Stomach (tissue), 19 donors: ENCODE measurements at regions of chr3 and their contacts with region 1.

Region 1: GRCh38 chr3:94071713-94072284 is 8.9 kb downstream of the NSUN3 start:
- DNase-seq: no peak
- H3K4me3 ChIP-seq: no peak overlapping the region
- H3K27ac ChIP-seq: no peak overlapping the region
- H3K4me1 ChIP-seq: peaks cover 0 to 31% (median 14%) of the 10 kb centered on the region in 4 donors
- H3K27me3 ChIP-seq: no peaks in the 10 kb centered on the region
- CTCF ChIP-seq: no peak
- EP300 ChIP-seq: no peak
- POLR2A ChIP-seq: no peak

Region 2: GRCh38 chr3:93904568-93904967 is 167.2 kb before region 1 on chr3:
- intact Hi-C with region 1: no loop called
- DNase-seq: no peak
- H3K4me3 ChIP-seq: no peak overlapping the region
- H3K27ac ChIP-seq: no peak overlapping the region
- H3K4me1 ChIP-seq: no peaks in the 10 kb centered on the region
- H3K27me3 ChIP-seq: no peaks in the 10 kb centered on the region
- CTCF ChIP-seq: no peak
- EP300 ChIP-seq: no peak
- POLR2A ChIP-seq: no peak

Region 3: DNA sequence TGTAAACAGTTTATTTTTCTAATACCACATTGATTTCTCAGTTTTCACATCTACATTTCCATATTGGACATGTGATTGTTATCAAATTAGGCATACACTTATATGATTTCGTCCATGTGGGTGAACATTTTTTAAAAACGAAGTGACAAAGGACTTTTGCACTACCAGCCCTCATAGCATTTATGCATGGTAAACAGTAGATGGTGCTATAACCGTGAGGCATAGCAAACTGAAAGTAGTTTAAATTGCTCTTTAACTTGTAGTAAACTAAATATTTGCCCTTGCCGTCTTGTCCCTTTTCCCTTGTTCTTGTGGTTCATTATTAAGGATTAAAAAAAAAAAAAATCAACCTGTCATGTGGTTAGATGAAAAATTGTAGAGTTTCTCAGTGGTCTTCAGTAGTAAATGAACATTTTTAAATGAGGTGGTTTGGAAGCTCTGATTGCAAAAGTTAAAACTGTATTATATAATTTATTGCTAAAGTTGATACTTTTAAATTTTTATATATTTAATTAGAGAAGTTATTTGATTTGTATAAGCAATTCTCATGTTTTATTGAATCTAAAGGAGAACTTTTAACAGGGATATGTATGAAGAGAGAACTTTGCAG is 67.4 kb before region 1 on chr3:
- intact Hi-C with region 1: loop called (anchors 5 kb)
- DNase-seq: peak in 1 of 2 donors; percentile 82
- H3K4me3 ChIP-seq: peak overlapping the region in 3 of 4 donors; percentile 9 to 23 (median 14)
- H3K27ac ChIP-seq: peak overlapping the region in 1 of 5 donors; percentile 21
- H3K4me1 ChIP-seq: peaks cover 0 to 50% (median 9%) of the 10 kb centered on the region in 4 donors
- H3K27me3 ChIP-seq: no peaks in the 10 kb centered on the region
- CTCF ChIP-seq: peak in 5 of 7 experiments; percentile 58 to 78 (median 72)
- EP300 ChIP-seq: no peak
- POLR2A ChIP-seq: no peak

Region 4: GRCh38 chr3:94173676-94174434 is 102.1 kb after region 1 on chr3:
- intact Hi-C with region 1: no loop called
- DNase-seq: no peak
- H3K4me3 ChIP-seq: no peak overlapping the region
- H3K27ac ChIP-seq: no peak overlapping the region
- H3K4me1 ChIP-seq: no peaks in the 10 kb centered on the region
- H3K27me3 ChIP-seq: no peaks in the 10 kb centered on the region
- CTCF ChIP-seq: no peak
- EP300 ChIP-seq: no peak
- POLR2A ChIP-seq: no peak

Region 5: DNA sequence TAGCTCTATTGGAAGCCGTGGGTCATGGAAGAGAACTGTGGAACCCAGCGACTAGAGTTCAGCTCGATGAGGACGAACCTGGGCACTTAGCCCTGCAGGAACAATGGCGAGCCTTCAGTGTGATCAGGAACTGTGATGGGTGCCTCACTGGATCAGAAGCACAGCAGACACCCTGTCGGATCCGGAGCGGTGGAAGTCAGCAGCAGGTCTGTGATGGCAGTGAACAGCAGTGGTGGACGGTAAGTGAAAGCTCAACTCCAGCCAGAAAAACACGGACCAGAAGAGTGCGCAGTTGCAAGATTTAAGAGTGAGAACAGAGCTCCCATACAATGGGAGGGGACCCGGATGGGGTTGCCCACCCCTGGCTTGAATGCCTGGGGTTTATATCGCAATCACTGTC is 273.3 kb after region 1 on chr3:
- intact Hi-C with region 1: no loop called
- DNase-seq: no peak
- H3K4me3 ChIP-seq: no peak overlapping the region
- H3K27ac ChIP-seq: no peak overlapping the region
- H3K4me1 ChIP-seq: no peaks in the 10 kb centered on the region
- H3K27me3 ChIP-seq: no peaks in the 10 kb centered on the region
- CTCF ChIP-seq: no peak
- EP300 ChIP-seq: no peak
- POLR2A ChIP-seq: no peak

Region 6: GRCh38 chr3:94532951-94533350 is 461.2 kb after region 1 on chr3:
- intact Hi-C with region 1: no loop called
- DNase-seq: no peak
- H3K4me3 ChIP-seq: no peak overlapping the region
- H3K27ac ChIP-seq: no peak overlapping the region
- H3K4me1 ChIP-seq: no peaks in the 10 kb centered on the region
- H3K27me3 ChIP-seq: no peaks in the 10 kb centered on the region
- CTCF ChIP-seq: no peak
- EP300 ChIP-seq: no peak
- POLR2A ChIP-seq: no peak